ENCODE measurements at regions of chr17 and their contacts with region 1.

Region 1: GRCh38 chr17:56653877-56654276 is 60.4 kb downstream of the NOG start:
- DNase-seq: peak; percentile 80
- H3K4me3 Mint-ChIP-seq: no peak overlapping the region
- H3K27ac Mint-ChIP-seq: no peak overlapping the region
- H3K4me1 Mint-ChIP-seq: peaks cover 4% of the 10 kb centered on the region
- H3K27me3 Mint-ChIP-seq: peaks cover 20% of the 10 kb centered on the region

Region 2: DNA sequence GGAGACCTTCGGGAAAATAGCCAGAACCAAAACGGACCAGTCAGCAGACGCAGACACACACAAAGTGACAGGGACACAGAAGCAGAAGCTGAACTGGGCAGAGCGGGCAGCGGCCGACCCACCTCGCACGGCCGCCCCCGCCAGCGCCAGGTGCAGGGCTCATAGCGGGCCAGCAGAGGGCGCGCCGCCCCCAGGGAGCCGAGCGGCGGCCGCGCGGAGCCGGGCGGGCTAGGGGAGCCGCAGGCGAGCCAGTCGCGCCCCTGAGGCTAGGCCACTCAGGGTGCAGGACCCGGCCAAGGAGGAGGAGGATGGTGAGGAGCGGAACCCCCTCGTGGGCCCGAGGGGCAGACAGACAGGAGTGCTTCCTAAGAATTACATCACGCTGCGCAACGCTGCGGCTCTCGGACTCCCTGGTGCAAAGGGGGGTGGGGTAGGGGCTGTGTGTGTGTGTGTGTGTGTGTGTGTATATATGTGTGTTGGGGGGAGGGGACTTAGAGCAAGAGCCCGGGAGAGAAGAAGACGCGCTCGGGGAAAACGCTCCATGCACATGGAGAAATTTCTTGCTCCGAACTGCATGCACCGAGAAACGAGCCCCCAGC is 61.3 kb before region 1 on chr17:
- CTCF ChIA-PET with region 1: interaction called, 24 read pairs
- DNase-seq: peak; percentile 69
- H3K4me3 Mint-ChIP-seq: peak overlapping the region; percentile 69
- H3K27ac Mint-ChIP-seq: no peak overlapping the region
- H3K4me1 Mint-ChIP-seq: peaks cover 32% of the 10 kb centered on the region
- H3K27me3 Mint-ChIP-seq: peaks cover 87% of the 10 kb centered on the region

Region 3: DNA sequence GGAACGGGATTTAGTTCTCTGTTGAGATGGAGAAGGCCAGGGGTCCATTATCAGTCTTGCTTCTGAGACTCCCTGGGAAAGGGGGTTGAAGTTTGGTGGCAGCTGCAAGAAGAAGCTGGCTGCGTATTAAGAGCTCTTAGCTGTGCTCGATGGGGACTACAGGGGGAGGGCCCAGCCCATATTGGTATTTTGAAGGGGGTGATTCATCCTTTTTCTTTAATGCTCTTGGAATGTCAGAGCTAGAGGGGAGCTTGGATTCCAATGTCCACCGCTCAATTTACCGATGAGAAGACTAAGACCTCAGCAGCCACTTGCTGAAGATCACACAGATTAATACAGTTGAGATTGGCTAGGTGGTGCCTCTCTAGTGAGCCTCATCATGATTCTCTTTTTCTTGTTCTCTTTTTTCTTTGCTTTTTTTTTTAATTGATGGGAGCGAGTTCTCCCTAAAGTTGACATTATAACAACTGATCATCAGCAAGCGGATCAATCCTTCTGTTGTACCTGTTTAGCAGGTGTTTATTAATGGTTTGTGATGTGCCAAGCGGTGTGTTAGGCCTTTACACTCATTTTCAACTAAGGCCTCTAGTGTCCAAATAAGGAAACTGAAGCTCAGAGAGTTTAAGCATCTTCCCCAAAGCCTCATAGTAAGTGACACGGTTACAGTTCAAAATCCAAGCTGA is 55.3 kb before region 1 on chr17:
- CTCF ChIA-PET with region 1: interaction called, 24 read pairs
- DNase-seq: no peak
- H3K4me3 Mint-ChIP-seq: peak overlapping the region; percentile 12
- H3K27ac Mint-ChIP-seq: peak overlapping the region; percentile 83
- H3K4me1 Mint-ChIP-seq: peaks cover 81% of the 10 kb centered on the region
- H3K27me3 Mint-ChIP-seq: peaks cover 48% of the 10 kb centered on the region